Calu3 (cell line): ENCODE measurements at regions of chr4 and their contacts with region 1.

Region 1: DNA sequence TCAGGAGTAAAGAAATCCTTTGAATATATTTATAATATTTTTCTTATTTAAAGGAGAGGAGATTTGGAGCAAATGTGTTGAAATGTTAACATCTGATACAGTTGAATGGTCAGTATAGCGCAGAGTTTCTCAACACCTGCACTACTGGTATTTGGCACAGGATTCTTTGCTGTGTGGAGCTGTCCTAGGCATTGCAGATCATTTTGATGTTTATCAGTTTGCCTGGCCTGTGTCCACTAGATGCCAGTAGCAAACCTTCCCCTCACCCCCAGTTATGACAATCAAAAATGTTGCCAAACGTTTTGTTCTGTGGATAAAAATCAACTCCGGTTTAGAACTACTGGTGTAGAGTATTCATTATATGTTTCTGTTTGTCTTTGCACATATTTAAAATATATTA is 765.3 kb upstream of the SLIT2 start:
- DNase-seq: peak; percentile 17
- H3K4me3 Mint-ChIP-seq: no peak overlapping the region
- H3K27ac Mint-ChIP-seq: no peak overlapping the region
- H3K4me1 Mint-ChIP-seq: no peaks in the 10 kb centered on the region
- H3K27me3 Mint-ChIP-seq: no peaks in the 10 kb centered on the region
- CTCF ChIP-seq: no peak

Region 2: GRCh38 chr4:19224820-19225219 is 261.6 kb before region 1 on chr4:
- CTCF ChIA-PET with region 1: no interaction called
- intact Hi-C with region 1: loop called (anchors 10 kb)
- DNase-seq: no peak
- H3K4me3 Mint-ChIP-seq: no peak overlapping the region
- H3K27ac Mint-ChIP-seq: no peak overlapping the region
- H3K4me1 Mint-ChIP-seq: no peaks in the 10 kb centered on the region
- H3K27me3 Mint-ChIP-seq: no peaks in the 10 kb centered on the region
- CTCF ChIP-seq: no peak

Region 3: GRCh38 chr4:19417256-19417655 is 69.1 kb before region 1 on chr4:
- CTCF ChIA-PET with region 1: no interaction called
- intact Hi-C with region 1: no loop called
- DNase-seq: no peak
- H3K4me3 Mint-ChIP-seq: no peak overlapping the region
- H3K27ac Mint-ChIP-seq: no peak overlapping the region
- H3K4me1 Mint-ChIP-seq: peaks cover 13% of the 10 kb centered on the region
- H3K27me3 Mint-ChIP-seq: no peaks in the 10 kb centered on the region
- CTCF ChIP-seq: no peak

Region 4: GRCh38 chr4:19645589-19645988 is 159.2 kb after region 1 on chr4:
- CTCF ChIA-PET with region 1: no interaction called
- intact Hi-C with region 1: no loop called
- DNase-seq: no peak
- H3K4me3 Mint-ChIP-seq: no peak overlapping the region
- H3K27ac Mint-ChIP-seq: no peak overlapping the region
- H3K4me1 Mint-ChIP-seq: no peaks in the 10 kb centered on the region
- H3K27me3 Mint-ChIP-seq: no peaks in the 10 kb centered on the region
- CTCF ChIP-seq: no peak

Region 5: GRCh38 chr4:19739101-19739720 is 252.8 kb after region 1 on chr4:
- CTCF ChIA-PET with region 1: no interaction called
- intact Hi-C with region 1: loop called (anchors 10 kb)
- DNase-seq: peak; percentile 42
- H3K4me3 Mint-ChIP-seq: peak overlapping the region; percentile 42
- H3K27ac Mint-ChIP-seq: peak overlapping the region; percentile 69
- H3K4me1 Mint-ChIP-seq: peaks cover 31% of the 10 kb centered on the region
- H3K27me3 Mint-ChIP-seq: no peaks in the 10 kb centered on the region
- CTCF ChIP-seq: no peak